ENCODE measurements at regions of chr11 and their contacts with region 1.

Region 1: GRCh38 chr11:67401495-67402191 is at the start of gene PPP1CA:
- DNase-seq: peak; percentile 99
- CTCF ChIP-seq: peak; percentile 50

Region 2: DNA sequence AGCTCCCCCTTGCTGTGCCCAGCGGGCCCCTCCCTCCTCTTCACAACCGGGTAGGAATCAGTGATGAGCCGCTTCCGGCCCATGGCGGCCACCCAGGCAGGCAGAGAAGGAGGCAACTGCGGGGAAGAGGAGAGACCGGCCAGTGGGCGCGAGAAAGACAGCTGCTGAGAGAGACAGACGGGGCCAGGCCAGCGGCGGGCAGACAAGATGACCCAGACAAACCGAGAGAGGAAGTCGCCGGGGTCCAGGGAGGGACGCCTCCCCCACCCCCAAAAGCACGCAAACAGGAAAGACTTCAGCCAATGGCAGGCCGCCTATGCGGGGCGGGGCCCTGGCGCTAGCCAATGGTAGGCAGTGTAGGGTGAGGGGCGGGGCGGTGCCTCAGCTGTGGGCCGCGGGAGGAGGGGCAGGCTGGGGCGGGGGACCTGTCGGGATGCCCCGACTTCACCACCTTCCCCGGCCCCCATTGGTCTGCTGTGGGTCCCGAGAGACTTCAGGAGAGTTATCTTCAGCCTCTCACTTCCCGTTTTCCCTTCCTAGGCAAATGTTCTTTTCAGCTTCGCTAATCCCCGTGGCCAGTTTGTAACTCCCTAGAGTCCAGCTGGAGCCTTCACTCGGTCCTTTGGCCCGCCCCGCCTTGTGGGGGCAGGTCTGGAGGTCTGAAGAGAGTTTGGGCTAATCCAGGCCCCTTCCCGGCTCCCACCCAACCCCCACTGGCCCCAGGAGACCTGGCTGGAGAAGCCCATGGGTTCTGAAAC is 48.1 kb before region 1 on chr11 and contains the start of gene POLD4:
- CTCF ChIA-PET with region 1: interaction called, 1,573 read pairs
- POLR2A ChIA-PET with region 1: interaction called, 7 read pairs
- DNase-seq: peak; percentile 98
- CTCF ChIP-seq: no peak

Region 3: DNA sequence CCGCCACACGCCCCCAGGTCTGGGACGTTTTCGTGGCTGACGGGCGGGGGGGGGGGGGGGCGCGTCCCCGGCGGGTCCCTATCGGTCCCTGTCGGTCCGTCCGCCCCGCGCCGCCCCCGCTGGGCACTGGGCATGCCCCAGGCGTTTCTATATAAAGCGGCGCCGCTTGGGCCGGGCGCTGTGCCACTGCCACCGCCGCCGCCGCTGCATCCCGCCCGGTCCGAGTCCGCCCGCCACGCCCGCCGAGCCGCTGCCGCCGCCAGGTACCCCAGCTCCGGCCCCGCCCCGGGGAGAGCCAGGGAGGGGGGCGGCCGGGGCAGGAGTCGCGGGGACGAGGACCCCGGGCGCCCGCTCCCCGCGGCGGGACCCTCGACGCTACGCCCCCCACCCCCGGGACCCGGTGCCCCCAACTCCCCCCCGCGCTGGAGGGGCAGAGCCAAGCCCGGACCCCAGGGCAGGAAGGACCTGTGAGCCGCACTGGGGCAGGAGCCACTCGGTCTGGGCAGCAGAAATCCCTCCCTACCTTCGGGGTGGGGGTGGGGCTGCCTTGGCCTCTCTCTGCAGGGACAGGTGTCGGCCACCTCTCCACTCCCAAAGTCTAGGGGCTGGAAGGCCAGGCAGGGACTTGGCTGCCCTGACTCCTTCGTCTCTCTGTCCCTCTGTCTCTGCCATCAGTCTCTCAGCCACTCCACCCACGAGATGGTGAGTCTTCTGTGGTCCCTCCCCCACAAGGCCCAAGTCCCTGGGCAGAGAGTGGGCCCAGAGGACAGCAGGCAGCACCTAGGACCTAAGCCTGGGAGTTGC is 14.1 kb after region 1 on chr11 and contains the start of gene CARNS1:
- CTCF ChIA-PET with region 1: interaction called, 50 read pairs
- POLR2A ChIA-PET with region 1: interaction called, 4 read pairs
- DNase-seq: no peak
- CTCF ChIP-seq: no peak

Region 4: DNA sequence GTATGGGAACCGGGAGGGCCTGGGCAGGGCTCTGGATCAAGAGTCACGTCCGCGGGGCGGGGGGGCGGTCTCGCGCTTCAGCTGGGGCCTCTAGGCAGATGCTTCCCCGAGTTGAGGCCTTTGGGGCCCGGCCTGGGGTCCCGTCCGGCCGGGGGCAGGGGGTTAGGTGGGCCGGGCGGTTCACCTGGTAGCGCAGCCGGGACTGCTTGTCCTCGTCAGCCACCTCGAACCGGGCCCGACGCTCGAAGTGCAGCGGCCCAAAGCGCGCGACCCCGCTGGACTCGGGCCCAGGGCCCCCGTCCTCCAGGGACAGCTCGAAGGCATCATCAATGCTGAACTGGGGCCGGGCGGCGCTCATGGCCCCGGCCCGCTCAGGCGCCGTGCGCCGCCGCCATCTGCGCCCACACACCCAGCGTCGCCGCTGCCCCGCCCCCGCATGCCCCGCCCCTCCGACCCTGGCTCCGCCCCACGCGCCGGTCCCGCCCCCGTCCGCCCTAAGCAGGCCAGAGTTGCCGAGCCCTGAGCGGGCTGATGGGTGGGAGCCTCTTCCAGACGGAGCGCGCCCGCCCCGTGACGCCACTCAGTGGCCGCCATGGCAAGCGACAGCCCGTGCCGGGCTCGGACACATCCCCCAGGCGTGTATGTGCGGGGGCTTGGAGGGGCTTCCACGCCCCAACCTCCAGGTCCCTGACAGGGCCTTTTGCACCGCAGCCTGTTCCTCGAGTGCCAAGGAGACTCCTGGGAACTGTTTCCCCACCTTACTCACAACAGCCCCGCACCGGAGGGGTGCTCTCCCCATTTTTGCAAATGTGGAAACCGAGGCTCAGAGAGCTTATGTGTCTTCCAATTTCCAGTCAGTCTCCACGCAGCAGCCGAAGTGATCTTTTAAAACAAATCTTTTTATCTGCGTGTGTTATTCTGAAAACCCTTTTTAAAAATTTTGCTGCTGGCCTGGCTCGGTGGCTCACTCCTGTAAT is 67.5 kb after region 1 on chr11 and contains the start of gene TMEM134:
- CTCF ChIA-PET with region 1: interaction called, 22 read pairs
- POLR2A ChIA-PET with region 1: interaction called, 3 read pairs
- DNase-seq: peak; percentile 96
- CTCF ChIP-seq: peak; percentile 76

Region 5: DNA sequence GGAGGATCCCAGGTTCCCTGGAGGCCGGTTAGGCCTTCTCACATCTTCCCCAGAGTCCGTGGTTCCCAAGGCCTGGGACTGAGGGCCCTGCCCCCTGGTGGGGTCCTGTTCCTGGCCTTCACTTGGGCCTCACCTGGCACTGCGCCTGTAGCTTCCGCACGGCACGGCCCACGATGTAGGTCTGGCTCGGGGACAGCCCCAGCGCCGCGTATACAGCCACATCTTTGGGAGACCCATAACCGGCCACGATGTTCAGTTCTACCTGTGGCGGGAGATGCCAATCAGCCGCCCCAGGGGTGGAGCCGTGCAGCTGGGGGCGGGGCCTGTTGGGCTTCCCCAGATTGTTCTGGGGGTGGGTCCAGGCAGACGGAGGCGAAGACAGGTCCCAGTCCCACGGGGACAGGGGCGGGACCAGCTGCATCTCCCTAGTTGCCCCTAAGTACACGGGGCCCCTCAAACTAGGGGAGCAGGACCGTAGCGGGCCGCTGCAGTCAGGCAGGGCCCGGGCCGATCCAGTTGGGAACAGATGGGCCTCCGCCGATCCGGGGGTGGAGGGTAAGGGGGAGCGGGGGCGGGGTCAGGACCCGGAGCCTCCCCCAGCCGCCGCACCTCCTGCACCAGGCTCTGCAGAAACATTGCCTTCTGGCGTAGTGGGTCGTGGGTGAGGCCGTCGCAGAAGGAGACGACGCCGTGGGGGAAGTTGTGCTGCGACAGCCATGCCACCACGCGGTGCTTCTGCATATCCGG is 91.3 kb after region 1 on chr11:
- CTCF ChIA-PET with region 1: interaction called, 15 read pairs
- POLR2A ChIA-PET with region 1: no interaction called
- DNase-seq: no peak
- CTCF ChIP-seq: no peak